Ovary (tissue), 10 donors: ENCODE measurements at regions of chr5 and their contacts with region 1.

Region 1: DNA sequence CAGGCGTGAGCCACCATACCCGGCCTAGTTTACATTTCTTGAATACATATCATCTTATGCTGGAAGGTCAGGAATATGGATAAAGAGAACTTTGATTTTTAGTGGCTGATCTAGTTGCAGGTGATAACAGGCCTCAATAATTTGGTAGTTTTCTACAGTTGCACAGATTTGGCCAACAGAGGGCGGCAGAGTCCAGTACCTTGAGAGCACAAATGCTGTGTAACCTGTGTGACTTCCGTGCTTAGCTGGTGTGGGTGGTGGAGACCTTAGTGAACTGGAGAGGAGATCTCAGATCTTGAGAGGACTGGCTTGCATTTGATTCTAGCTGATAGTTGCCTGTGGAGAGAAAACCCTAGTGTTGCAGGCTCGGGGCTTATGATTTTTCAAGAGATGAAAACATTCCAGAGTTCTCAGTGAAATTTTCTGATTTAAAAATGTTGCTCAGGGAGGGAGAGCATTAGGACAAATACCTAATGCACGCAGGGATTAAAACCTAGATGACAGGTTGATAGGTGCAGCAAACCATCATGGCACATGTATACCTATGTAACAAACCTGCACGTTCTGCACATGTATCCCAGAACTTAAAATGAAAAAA is 17.4 kb upstream of the GPR151 start:
- DNase-seq: peak; percentile 15 to 59 (median 38)
- H3K4me3 ChIP-seq: no peak overlapping the region
- H3K27ac ChIP-seq: no peak overlapping the region
- H3K4me1 ChIP-seq: no peaks in the 10 kb centered on the region
- H3K27me3 ChIP-seq: no peaks in the 10 kb centered on the region
- CTCF ChIP-seq: peak in 1 of 3 donors; percentile 29
- EP300 ChIP-seq: no peak
- POLR2A ChIP-seq: no peak

Region 2: DNA sequence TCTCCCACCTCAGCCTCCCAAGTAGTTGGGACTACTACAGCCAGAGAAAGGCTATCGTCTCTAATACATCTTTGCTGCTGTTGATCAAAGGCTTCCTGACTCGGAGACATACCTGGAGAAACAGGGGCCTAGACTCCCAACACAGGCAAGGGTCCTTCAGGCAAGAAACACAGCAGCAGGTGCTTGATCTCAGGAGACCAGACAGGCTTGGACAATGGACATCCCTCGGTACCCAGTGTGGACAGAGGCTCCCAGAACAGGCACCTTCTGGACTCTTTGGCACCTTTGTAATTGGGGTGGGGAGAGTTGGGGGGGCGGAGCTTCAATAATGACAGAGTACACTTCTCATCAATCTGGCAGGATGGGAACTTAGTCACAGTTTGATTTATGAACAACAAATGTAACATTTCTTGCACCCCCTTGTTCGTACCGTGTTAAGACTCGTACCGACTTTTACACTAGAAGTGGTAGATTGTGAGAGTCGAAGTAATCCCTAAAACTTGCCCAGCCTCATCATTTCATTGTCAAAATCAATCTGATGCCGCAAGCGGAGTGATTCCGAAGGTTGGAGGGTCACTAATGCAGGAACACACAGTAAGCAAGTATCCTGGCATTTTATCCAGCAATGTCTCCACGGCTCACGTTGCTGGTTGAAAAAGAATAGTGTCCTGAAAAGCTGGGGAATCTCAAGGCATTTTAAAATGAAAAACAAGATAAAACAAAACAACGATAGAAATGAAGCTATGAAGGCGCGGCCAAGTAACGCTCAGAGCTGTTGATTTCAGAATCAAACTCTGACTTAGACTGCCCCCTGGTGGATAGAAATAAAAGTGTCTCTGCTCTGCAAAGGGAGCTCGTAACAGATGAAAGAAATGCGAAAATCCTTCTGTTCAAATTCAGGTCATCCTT is 655.1 kb after region 1 on chr5:
- intact Hi-C with region 1: loop called in 2 of 4 experiments (anchors 5 to 10 kb)
- DNase-seq: peak; percentile 28 to 57 (median 35)
- H3K4me3 ChIP-seq: no peak overlapping the region
- H3K27ac ChIP-seq: no peak overlapping the region
- H3K4me1 ChIP-seq: no peaks in the 10 kb centered on the region
- H3K27me3 ChIP-seq: no peaks in the 10 kb centered on the region
- CTCF ChIP-seq: peak; percentile 52 to 79 (median 69)
- EP300 ChIP-seq: no peak
- POLR2A ChIP-seq: no peak